ENCODE measurements at regions of chr19 and their contacts with region 1.

Region 1: DNA sequence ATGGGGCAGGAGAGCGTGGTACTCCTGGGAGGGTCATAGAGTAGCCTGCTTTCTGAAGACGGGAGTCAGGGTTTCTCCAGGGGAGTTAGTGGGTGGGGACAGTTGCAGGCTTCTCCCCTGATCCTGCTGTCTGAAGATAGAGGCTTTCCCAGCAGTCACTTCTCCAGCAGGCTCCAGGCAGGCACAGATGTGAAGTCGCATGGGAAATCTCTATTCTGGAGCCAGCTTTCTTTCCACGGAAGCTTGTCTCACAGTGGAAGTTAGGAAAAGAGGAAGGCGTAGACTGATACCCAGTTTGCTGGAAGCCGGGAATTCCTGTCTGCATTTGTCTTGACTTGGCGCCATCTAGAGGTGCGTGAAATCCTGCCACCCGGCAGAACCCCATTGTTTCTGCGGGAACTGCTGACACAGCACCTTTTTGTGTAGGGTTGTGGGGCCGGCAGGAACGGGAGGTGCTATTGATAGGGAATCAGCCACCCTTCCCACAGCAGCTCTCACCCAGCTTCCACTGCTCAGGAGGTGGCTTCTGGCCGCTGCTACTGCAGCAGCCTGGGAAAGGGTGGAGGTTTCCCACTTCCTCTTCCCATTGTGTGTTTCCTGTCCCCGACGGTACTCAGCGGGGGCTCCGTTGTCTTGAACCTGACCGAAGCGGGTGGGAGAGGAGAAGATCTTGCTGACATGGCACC is 28.5 kb upstream of the NPAS1 start:
- DNase-seq: peak; percentile 63
- ATAC-seq: peak; percentile 68
- H3K4me3 Mint-ChIP-seq: no peak overlapping the region
- H3K27ac Mint-ChIP-seq: peak overlapping the region; percentile 68
- H3K4me1 Mint-ChIP-seq: peaks cover 15% of the 10 kb centered on the region
- H3K27me3 Mint-ChIP-seq: no peaks in the 10 kb centered on the region

Region 2: DNA sequence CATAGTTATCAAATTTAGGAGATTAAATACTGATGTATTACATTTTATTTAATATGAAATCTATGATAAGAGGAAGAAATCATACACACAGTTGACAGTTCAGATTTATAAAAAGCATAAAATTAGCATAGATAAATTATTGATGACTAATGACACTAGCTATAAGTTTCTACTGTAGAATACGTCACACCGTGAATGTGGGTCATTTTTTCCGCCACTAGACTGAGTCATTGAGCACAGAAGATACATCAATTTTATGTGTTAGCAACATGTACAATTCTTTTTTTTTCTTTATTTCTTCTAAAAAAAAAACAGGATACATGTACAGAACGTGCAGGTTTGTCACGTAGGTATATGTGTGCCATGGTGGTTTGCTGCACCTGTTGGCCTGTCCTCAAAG is 162.7 kb before region 1 on chr19:
- CTCF ChIA-PET with region 1: no interaction called
- POLR2A ChIA-PET with region 1: no interaction called
- DNase-seq: peak; percentile 33
- ATAC-seq: no peak
- H3K4me3 Mint-ChIP-seq: no peak overlapping the region
- H3K27ac Mint-ChIP-seq: no peak overlapping the region
- H3K4me1 Mint-ChIP-seq: peaks cover 16% of the 10 kb centered on the region
- H3K27me3 Mint-ChIP-seq: no peaks in the 10 kb centered on the region

Region 3: DNA sequence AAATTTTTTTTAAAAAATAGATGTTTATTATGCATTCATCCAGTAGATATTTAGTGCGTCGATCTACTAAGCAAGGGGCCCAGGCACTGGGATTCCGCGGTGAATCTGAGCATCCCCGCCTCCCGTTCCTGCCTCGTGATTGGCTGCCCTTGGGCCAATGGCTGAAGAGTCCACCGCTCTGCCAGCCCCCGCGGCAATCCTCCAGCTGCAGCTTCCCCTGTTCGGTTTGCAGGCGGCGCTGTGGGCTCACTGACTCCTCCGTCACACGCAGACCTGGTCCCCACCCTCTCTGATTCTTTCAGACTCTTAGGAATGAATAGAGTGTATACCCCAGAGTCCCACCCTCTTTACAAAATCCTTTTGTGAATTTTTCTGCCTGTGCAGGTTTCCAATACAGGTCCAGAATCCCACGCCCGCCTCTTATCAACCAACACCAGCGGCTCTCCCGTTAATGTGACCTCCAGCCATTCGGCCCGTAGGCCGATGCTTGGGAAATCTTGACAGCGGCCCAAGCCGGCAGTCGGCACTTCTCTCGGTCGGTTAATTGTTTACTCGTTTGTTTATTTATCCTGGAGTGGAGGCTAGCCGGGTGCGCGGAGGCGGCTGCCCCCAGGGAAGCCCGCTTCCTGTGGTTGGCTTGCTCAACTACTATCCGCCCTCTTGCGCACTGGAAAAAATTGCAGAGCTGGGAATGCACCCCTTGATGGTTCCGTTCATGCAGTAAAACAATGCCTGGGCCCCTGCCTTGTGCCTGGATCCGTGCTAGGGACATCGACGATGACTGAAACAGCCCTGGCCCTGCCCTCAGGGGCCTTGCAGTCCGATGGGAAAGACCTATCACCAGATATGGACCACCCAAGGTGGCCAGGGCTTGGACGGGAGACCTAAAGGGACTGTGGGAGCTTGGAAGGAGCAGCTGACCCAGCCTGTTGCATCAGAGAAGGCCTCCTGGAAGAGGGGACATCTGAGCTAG is 134.8 kb before region 1 on chr19:
- CTCF ChIA-PET with region 1: interaction called, 38 read pairs
- POLR2A ChIA-PET with region 1: no interaction called
- DNase-seq: peak; percentile 95
- ATAC-seq: peak; percentile 64
- H3K4me3 Mint-ChIP-seq: peak overlapping the region; percentile 73
- H3K27ac Mint-ChIP-seq: peak overlapping the region; percentile 80
- H3K4me1 Mint-ChIP-seq: peaks cover 28% of the 10 kb centered on the region
- H3K27me3 Mint-ChIP-seq: peaks cover 7% of the 10 kb centered on the region

Region 4: GRCh38 chr19:46924874-46925547 is 66.1 kb before region 1 on chr19:
- CTCF ChIA-PET with region 1: interaction called, 17 read pairs
- POLR2A ChIA-PET with region 1: no interaction called
- DNase-seq: peak; percentile 56
- ATAC-seq: peak; percentile 82
- H3K4me3 Mint-ChIP-seq: no peak overlapping the region
- H3K27ac Mint-ChIP-seq: peak overlapping the region; percentile 60
- H3K4me1 Mint-ChIP-seq: peaks cover 41% of the 10 kb centered on the region
- H3K27me3 Mint-ChIP-seq: no peaks in the 10 kb centered on the region

Region 5: DNA sequence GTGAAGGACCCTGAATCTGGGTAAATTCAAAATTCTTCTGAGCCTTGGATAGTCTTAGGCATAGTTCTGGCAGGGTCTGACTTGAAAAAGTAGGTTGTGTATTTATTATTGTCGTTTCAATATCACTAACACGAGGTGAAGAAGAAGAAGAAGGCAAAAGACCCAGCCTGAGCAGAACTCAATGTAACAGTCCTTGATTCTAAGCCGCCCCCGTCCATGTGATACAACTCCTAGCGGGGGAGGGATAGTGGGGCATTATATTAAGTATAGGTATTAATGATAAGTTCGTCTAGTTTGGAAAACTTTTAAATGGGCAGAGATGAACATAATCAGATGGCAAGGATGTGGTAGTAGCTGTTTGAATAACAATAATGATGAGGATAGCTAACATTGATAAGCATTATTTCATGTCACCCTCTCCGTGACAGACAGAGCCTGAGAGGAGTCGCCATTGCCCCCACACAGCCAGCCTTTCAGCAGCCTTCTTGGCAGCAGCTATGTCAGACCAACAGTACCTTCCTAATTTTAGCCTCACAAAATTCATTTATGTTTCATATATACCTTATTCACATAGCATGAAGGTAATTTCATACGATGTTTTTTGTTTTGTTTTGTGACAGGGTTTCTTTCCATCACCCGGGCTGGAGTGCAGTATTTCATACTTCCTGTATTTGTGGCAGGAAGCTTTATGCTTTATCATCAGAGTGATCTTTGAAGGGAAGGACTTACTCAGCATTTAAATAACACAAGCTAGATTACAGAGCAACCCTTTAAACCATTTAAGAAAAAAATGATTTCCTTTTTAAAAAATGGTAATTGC is 35.9 kb before region 1 on chr19:
- CTCF ChIA-PET with region 1: interaction called, 13 read pairs
- POLR2A ChIA-PET with region 1: interaction called, 3 read pairs
- DNase-seq: peak; percentile 60
- ATAC-seq: peak; percentile 83
- H3K4me3 Mint-ChIP-seq: peak overlapping the region; percentile 65
- H3K27ac Mint-ChIP-seq: peak overlapping the region; percentile 89
- H3K4me1 Mint-ChIP-seq: peaks cover 62% of the 10 kb centered on the region
- H3K27me3 Mint-ChIP-seq: no peaks in the 10 kb centered on the region

Region 6: DNA sequence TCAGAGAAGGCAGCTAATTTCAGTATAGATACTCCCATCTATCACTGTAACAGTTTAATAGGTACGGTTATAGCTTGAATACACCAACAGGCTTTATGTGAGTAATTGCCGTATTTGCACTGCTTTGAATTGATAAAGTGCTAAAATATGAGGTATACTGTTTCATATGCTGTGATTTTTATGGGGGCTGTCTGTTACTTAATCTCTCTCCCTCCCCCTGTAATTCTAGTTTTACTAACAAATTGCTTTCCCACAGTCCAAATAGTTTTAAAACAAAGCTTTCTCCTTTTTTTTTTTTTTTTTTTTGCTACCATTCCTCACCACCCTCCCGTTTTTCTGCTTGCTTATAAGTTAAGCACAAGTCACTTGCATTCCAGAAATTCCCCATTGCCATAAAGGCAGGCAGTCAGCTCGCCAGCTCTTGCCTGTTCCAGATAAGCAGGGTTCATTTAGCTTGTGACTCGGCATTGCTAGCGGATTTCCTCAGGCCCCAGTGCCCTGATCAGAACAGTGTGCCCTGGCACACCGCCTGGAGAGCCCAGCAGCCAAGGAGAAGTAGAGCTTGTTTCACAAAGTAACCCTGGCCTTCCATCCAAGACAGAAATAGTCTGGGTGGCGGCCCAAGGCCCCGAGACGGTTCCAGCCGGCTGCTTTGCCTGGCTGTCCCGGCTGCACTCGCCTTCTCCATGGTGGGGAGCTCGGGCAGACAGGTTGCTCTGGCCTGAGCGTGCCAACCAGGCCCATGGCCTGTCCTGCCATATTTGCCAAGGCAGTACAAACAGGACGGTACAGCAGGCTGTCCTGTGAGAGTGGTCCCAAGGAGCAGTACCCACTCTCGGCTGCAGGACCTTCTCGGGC is 15.0 kb before region 1 on chr19:
- CTCF ChIA-PET with region 1: interaction called, 22 read pairs
- POLR2A ChIA-PET with region 1: no interaction called
- DNase-seq: no peak
- ATAC-seq: no peak
- H3K4me3 Mint-ChIP-seq: no peak overlapping the region
- H3K27ac Mint-ChIP-seq: no peak overlapping the region
- H3K4me1 Mint-ChIP-seq: peaks cover 33% of the 10 kb centered on the region
- H3K27me3 Mint-ChIP-seq: no peaks in the 10 kb centered on the region

Region 7: DNA sequence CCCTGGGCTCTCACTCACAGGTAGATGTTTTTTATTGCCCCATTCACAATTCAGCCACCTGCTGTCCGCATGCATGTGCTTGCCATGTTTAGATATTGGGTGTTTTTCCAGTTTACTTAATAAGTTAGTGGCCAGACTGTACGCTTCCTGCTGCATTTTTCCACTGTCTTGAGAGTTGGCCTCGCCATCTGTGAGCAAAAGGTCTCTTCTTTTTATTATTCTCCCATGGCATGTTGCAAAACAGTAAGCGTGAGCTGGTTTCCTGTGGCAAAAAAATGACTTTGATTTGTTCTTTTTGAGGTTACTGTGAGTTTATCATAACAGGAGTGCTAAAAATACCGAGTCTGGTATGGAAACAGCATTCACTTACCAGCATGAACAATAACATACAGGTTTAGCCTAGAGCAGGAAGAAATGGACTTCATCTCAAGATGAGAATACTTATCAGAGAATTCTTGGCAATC is 185.5 kb after region 1 on chr19:
- CTCF ChIA-PET with region 1: no interaction called
- POLR2A ChIA-PET with region 1: no interaction called
- DNase-seq: peak; percentile 41
- ATAC-seq: peak; percentile 73
- H3K4me3 Mint-ChIP-seq: peak overlapping the region; percentile 17
- H3K27ac Mint-ChIP-seq: peak overlapping the region; percentile 74
- H3K4me1 Mint-ChIP-seq: peaks cover 54% of the 10 kb centered on the region
- H3K27me3 Mint-ChIP-seq: no peaks in the 10 kb centered on the region

Measured in activated CD8-positive, alpha-beta T cell treated with anti-CD3 and anti-CD28 coated beads, Interleukin-2, amount 10 ng/mL, durations not matched to agents 7 days and 5 days (primary cell).